AG04449 (cell line): ENCODE measurements at regions of chr10 and their contacts with region 1.

Region 1: DNA sequence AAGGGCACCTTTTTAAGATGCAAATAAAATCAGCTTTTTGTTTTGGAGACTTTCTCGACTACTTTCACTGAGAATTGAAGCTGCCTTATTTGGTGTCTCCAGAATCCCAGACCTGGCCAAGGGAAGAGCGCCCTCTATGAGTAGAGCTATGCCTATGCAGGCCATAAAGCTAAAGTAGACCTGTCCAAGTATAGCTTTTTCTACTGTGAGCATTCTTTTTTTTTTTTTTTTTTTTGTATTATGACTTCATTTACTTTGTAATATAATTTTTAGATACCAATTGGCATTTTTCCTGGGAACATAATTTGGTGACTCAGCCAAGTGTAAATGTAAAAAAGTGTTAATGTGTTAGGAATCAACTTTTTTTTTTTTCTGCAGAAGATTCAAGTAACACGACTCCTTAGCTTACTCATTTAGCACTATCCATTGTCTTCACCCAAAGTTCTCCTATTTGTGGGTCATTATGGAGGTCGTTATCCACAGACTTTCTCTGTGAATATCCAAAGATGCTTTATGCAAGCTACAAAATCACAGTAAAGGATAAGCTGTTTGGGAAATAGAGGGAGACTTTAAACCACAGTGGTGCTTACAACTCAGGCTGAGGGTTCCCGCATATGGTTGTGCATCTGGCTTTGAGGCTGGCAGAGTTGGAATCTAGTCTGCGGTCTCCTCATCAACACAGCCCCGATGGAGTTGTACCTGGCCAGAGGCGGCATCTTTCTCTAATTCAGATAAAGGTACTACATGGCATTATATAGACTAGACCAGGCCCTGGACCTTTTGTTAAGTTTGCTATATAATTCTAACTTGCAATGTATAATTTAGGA is 1040.2 kb upstream of the SORCS1 start:
- DNase-seq: no peak
- H3K4me3 ChIP-seq: no peak overlapping the region
- CTCF ChIP-seq: peak; percentile 62

Region 2: GRCh38 chr10:107994621-107995270 is 209.9 kb before region 1 on chr10:
- CTCF ChIA-PET with region 1: no interaction called
- POLR2A ChIA-PET with region 1: no interaction called
- DNase-seq: no peak
- H3K4me3 ChIP-seq: no peak overlapping the region
- CTCF ChIP-seq: no peak

Region 3: GRCh38 chr10:108180878-108181277 is 23.8 kb before region 1 on chr10:
- CTCF ChIA-PET with region 1: interaction called, 11 read pairs
- POLR2A ChIA-PET with region 1: no interaction called
- DNase-seq: no peak
- H3K4me3 ChIP-seq: no peak overlapping the region
- CTCF ChIP-seq: no peak

Region 4: DNA sequence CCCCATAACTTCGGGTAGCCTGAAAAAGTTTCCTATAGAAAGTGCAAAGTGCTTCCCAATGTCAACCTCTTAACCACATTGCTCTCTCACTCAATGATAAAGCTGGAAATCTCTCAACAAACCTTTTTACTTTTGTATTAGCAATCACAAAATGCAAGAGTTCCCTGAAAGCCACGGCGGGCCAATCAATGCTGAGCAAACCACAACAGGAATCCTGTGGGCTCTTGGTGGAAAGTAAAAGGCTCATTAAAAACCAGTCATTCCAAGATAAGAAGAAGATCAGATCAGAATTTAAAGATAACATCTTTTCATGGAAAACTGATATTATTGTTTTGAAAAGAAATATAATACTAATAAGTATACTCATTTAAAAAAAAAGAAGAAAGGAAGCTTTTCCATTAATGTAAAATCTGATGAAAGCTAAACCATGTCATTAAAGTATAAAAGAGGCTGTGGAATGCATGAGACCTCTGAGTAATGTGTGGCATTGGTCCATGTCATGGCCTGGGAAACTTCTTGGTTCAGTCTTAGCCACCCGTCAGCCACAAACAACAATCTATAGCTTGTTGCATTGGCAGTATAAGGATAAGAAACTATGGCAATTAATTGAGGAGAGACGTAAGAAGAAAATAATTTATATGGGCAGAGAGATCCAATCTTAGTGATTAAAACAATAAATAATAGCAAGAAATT is 25.9 kb after region 1 on chr10:
- CTCF ChIA-PET with region 1: interaction called, 11 read pairs
- POLR2A ChIA-PET with region 1: no interaction called
- DNase-seq: no peak
- H3K4me3 ChIP-seq: no peak overlapping the region
- CTCF ChIP-seq: no peak